ENCODE measurements at regions of chr15 and their contacts with region 1.

Region 1: DNA sequence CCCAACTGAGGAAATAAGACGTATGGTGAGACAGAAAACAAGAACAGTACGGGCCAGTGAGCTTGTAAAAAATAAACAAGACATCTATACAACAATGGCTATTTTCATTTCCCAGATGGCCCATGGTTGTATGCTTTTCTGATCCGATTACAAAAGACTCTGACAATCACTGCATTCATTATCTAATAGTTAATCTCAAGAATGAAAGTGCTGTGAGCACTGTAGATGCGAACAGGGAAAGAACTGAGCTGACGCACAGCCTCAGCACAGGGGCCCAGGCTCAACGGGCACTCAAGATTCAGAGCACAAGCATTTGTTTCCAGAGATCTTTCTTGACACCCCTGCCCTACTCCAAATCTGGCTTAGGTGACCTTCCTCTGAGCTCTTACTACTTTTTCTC is 6.9 kb downstream of the MTMR10 start:
- DNase-seq: peak in 4 of 10 donors; percentile 25 to 61 (median 50)
- H3K4me3 ChIP-seq: peak overlapping the region in 54 of 59 donors; percentile 1 to 61 (median 27)
- H3K27ac ChIP-seq: peak overlapping the region; percentile 43 to 98 (median 93)
- H3K27me3 ChIP-seq: no peaks in the 10 kb centered on the region
- CTCF ChIP-seq: peak in 4 of 56 donors; percentile 8 to 26 (median 12)

Region 2: GRCh38 chr15:31101262-31102038 is 116.9 kb after region 1 on chr15 and contains the start of gene TRPM1:
- intact Hi-C with region 1: loop called in 1 of 2 experiments (anchors 5 kb)
- DNase-seq: no peak
- H3K4me3 ChIP-seq: no peak within 1 kb of the TSS
- H3K27ac ChIP-seq: peak within 1 kb of the TSS in 38 of 59 donors; percentile 31 to 89 (median 74)
- H3K27me3 ChIP-seq: no peaks in the 10 kb centered on the region
- CTCF ChIP-seq: no peak
- total RNA-seq, gene TRPM1: 0.06 to 2.4 (median 0.70) TPM in 60 of 120 experiments, not detected in the others

Measured in dorsolateral prefrontal cortex (tissue), 120 donors.